Activated CD4-positive, alpha-beta memory T cell treated with anti-CD3 and anti-CD28 coated beads for 36 hours (primary cell): ENCODE measurements at regions of chr2 and their contacts with region 1.

Region 1: GRCh38 chr2:12456293-12457151 is 260.2 kb upstream of the TRIB2 start:
- DNase-seq: peak; percentile 79
- H3K4me3 Mint-ChIP-seq: peak overlapping the region; percentile 70
- H3K27ac Mint-ChIP-seq: peak overlapping the region; percentile 91
- H3K4me1 Mint-ChIP-seq: peaks cover 36% of the 10 kb centered on the region
- H3K27me3 Mint-ChIP-seq: no peaks in the 10 kb centered on the region

Region 2: DNA sequence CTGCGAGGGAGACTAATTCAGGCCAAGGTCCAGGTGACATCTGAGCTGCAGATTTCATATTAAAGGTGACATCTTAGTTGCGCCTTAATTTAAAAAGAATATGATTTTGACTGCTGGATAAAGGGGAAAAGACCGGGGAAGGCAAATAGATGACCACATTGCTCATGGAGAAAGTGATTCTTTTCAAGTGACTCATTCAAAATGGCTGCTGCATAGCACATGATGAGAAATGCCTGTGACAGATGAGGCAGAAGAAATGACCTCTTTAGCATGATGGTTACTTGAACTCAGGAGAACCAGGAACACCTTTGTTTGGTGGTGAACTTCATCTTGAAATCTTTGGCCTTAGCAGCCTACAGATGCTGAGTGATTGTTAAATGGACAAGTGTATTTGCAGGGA is 125.6 kb before region 1 on chr2:
- CTCF ChIA-PET with region 1: no interaction called
- POLR2A ChIA-PET with region 1: no interaction called
- intact Hi-C with region 1: no loop called
- DNase-seq: no peak
- H3K4me3 Mint-ChIP-seq: no peak overlapping the region
- H3K27ac Mint-ChIP-seq: no peak overlapping the region
- H3K4me1 Mint-ChIP-seq: peaks cover 8% of the 10 kb centered on the region
- H3K27me3 Mint-ChIP-seq: no peaks in the 10 kb centered on the region

Region 3: DNA sequence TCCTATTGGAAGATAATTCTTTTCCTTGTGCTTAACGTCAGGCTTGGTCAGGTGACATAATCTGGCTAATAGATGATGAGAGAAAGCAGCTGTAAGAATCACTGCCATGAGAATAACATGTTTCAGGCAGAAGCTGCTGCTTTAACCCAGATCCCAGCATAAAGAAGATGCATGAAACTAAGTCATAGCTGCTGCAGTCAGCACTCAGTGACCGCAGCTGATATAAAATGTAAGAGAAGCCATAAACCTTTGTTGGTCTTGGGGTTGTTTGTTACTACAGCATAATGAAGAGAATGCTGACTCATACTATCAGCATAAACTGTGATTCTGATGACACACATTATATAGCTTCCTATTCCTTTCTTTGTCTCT is 14.1 kb before region 1 on chr2:
- CTCF ChIA-PET with region 1: interaction called, 3 read pairs
- POLR2A ChIA-PET with region 1: no interaction called
- intact Hi-C with region 1: loop called (anchors 1 kb)
- DNase-seq: peak; percentile 28
- H3K4me3 Mint-ChIP-seq: no peak overlapping the region
- H3K27ac Mint-ChIP-seq: no peak overlapping the region
- H3K4me1 Mint-ChIP-seq: peaks cover 25% of the 10 kb centered on the region
- H3K27me3 Mint-ChIP-seq: no peaks in the 10 kb centered on the region

Region 4: GRCh38 chr2:12493031-12493513 is 36.5 kb after region 1 on chr2:
- CTCF ChIA-PET with region 1: interaction called, 3 read pairs
- POLR2A ChIA-PET with region 1: no interaction called
- intact Hi-C with region 1: loop called (anchors 1 kb)
- DNase-seq: peak; percentile 82
- H3K4me3 Mint-ChIP-seq: peak overlapping the region; percentile 3
- H3K27ac Mint-ChIP-seq: peak overlapping the region; percentile 86
- H3K4me1 Mint-ChIP-seq: peaks cover 69% of the 10 kb centered on the region
- H3K27me3 Mint-ChIP-seq: no peaks in the 10 kb centered on the region

Region 5: DNA sequence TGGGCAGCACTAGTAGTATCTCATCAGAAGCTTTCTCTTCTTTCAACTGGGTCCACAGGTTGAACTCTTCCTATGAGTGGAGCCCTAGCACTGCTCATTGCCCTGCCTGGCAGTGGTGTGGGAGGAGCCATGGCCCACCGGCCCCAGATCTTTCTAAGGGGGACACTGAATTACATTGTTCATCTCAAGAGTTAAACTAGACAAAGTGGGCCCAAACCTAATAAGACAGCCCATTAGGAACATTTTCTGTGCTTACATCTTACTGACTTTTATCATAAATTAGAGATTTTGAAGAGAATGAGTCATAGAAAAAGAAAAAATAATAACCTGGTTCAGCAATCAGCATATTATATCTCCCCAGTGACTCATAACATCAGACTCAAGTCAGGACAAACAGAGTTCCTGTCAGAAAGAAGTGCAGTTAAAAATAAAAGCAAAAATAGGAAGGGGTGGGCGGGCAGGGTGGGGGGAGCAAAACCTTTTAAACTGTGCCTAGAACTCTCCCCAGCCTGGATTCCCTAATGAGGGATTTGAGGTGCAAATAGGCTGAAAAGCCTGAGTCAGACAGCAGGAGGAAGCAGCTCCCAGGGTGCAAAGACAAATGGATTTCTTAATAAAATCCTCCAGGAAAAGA is 98.6 kb after region 1 on chr2:
- CTCF ChIA-PET with region 1: no interaction called
- POLR2A ChIA-PET with region 1: no interaction called
- intact Hi-C with region 1: loop called (anchors 1 kb)
- DNase-seq: peak; percentile 52
- H3K4me3 Mint-ChIP-seq: peak overlapping the region; percentile 21
- H3K27ac Mint-ChIP-seq: peak overlapping the region; percentile 80
- H3K4me1 Mint-ChIP-seq: peaks cover 40% of the 10 kb centered on the region
- H3K27me3 Mint-ChIP-seq: no peaks in the 10 kb centered on the region